ENCODE measurements at regions of chr1 and their contacts with region 1.

Region 1: DNA sequence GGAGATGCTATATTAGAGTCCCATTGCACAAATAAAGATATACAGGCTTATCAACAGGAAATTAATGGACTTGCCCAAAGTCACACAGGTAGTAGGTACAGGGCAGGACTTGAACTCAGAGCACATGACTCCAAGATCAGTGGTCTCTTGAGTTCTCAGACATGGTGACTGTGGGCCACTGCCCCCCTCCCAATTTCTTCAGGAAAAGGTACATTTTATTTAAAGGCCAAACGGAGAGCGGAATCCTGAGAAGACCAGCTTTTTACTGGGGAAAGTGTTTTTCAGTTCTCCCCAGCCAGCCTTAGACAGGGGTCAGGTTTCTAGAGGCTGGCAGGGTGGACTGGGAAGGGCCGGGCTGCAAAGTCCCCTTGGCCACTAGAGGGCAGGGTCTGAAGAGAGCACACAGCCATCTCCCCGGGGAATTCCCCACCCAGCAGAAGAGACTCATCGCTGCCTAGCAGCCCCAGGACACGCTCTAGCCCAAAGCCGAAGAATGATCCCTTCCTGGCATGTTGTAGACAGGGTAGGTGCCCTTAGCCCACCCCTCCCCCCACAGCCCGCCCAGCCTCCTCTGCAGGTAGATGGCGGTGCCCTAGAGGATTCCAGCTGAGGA is 29.7 kb downstream of the ACP6 start:
- DNase-seq: peak; percentile 93
- H3K4me3 Mint-ChIP-seq: no peak overlapping the region
- H3K27ac Mint-ChIP-seq: no peak overlapping the region
- H3K4me1 Mint-ChIP-seq: peaks cover 41% of the 10 kb centered on the region
- H3K27me3 Mint-ChIP-seq: no peaks in the 10 kb centered on the region

Region 2: DNA sequence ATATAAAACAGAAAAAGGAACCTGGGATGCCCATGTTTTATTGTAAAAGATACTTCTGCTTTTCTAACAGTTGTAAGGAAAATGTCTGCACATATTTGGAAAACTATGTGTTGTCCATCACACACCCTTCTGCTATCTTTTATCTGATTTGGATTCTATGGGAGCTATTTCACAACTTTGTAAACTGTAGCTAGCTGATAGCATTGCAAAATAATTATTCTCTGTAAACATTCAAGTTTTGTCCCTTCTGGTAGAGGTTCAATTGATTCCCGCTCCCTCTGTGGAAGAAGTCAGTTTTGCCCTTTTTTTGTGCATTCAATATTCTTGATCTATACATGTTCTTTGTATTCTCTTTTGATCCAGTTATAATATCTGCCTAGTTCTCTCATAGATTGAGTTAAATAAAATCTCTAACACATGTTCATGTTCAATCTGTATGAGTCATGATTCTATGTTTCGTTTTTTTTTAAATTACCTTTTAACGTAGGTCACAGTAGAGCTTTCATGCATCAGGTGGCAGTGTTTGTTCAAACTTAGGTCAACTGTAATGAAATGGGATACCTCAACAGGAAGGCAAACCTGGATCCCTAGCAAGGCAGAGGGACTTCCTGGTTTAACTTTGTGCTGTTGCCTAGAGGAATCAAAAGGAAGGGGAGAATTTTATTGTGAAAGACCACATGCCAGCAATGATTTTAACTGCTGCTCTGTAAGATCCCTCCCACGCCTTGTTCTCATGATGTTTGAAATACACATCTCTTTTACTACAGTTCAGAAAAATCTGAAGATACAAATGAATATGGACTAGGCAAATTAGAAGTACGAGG is 125.4 kb before region 1 on chr1:
- intact Hi-C with region 1: loop called (anchors 5 kb)
- DNase-seq: peak; percentile 61
- H3K4me3 Mint-ChIP-seq: no peak overlapping the region
- H3K27ac Mint-ChIP-seq: no peak overlapping the region
- H3K4me1 Mint-ChIP-seq: peaks cover 6% of the 10 kb centered on the region
- H3K27me3 Mint-ChIP-seq: peaks cover 8% of the 10 kb centered on the region

Region 3: DNA sequence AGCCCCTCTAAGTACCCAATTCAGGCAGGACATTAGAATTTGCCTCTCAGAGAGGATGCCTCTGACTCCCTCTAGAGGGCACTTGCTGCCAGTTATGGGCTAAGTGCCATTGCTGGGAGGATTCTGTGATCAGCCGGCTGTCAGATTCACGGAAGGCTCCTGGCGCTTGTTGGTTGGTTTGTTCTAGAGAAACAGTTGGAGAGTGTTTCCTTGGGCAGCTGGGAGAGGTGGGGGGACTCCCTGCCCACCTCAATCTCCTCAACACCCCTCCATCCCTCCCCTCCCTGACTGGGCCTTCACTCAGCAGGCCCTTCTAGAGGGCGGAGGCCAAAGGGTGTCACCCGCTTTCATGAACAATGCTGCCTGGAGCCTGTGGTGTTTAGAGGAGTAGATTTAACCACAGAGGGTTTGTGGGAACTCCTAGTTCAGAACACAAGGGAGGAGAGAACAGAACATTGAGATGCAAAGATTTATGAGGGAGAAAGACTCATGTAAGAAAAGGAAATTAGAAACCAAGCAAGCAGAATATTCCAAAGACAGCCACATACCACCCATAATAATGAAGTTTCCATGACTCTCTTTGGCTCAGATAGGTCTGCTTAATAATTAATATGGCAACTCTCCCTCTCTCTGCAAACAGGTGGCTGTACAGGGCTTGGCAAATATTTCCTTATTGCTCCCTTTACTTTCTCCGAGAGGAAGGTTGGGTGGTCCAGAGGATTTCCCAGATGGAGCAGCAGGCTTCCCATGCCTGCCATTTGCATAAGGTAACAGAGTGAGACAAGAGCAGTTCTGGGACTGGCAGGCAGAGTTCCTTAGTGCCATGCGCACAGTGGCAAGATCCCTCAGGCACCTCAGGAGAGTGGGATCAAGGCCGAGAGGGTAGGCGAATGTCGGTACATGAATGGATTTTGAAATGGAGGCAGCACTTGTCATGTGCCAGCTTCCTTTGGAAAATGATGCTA is 59.7 kb after region 1 on chr1:
- intact Hi-C with region 1: loop called (anchors 1 kb)
- DNase-seq: peak; percentile 88
- H3K4me3 Mint-ChIP-seq: no peak overlapping the region
- H3K27ac Mint-ChIP-seq: no peak overlapping the region
- H3K4me1 Mint-ChIP-seq: peaks cover 7% of the 10 kb centered on the region
- H3K27me3 Mint-ChIP-seq: peaks cover 34% of the 10 kb centered on the region

Region 4: GRCh38 chr1:147717063-147717565 is 76.5 kb after region 1 on chr1:
- intact Hi-C with region 1: no loop called
- DNase-seq: no peak
- H3K4me3 Mint-ChIP-seq: no peak overlapping the region
- H3K27ac Mint-ChIP-seq: no peak overlapping the region
- H3K4me1 Mint-ChIP-seq: peaks cover 7% of the 10 kb centered on the region
- H3K27me3 Mint-ChIP-seq: peaks cover 22% of the 10 kb centered on the region